ENCODE measurements at regions of chr5 and their contacts with region 1.

Region 1: DNA sequence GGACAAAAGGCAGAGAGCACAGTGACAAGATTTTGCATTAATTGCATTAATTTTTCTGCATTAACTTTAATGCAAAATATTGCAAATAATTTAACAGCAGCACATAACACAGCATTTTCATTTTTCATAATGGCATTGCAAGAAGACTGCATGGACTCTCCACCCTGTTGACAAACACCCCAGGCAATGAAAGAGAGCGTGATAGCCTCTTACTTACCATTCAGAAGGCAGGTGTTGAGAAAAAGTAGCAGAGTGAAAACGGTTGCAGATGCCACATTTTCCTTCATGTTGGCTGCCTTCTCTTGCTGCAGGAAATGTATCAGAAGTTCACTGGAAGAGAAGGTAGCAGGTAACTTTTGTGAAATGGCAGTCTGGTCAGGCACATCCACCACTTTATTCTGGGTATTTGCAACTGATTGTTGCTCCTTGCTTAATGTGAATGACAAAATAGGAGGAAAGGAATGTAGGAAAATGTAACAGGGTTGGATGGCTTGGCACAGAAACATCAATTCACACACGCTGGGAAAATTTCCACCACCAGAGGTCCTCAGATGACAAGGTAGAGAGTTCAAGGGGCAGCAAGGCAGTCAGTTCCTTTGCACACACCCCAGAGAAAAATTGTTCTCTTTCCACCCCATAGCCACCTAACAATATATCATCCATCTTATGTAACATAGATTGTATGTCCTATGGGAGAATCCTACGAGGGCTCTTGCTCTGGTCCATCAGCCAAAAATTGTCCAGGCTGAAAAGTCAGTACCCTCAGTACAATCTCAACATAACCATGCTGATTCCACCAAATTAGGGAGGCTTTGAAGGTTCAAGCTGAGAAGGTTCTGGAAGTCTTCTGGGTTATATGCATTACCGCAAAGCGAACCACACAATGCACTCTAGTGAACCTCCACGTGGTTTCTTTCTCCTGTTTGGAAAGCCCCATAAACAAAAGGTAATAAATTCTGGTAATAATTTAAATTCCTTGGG is 41.9 kb upstream of the AGXT2 start:
- DNase-seq: peak; percentile 82
- H3K4me3 ChIP-seq: no peak overlapping the region
- H3K27ac ChIP-seq: no peak overlapping the region
- H3K4me1 ChIP-seq: no peaks in the 10 kb centered on the region
- H3K27me3 ChIP-seq: no peaks in the 10 kb centered on the region
- CTCF ChIP-seq: peak; percentile 69

Region 2: GRCh38 chr5:35182541-35183535 is 93.2 kb after region 1 on chr5:
- intact Hi-C with region 1: loop called (anchors 5 kb)
- DNase-seq: peak; percentile 59
- H3K4me3 ChIP-seq: no peak overlapping the region
- H3K27ac ChIP-seq: no peak overlapping the region
- H3K4me1 ChIP-seq: no peaks in the 10 kb centered on the region
- H3K27me3 ChIP-seq: no peaks in the 10 kb centered on the region
- CTCF ChIP-seq: peak; percentile 39

Region 3: GRCh38 chr5:35369965-35370790 is 280.6 kb after region 1 on chr5:
- intact Hi-C with region 1: no loop called
- DNase-seq: no peak
- H3K4me3 ChIP-seq: no peak overlapping the region
- H3K27ac ChIP-seq: no peak overlapping the region
- H3K4me1 ChIP-seq: peaks cover 4% of the 10 kb centered on the region
- H3K27me3 ChIP-seq: no peaks in the 10 kb centered on the region
- CTCF ChIP-seq: no peak

Region 4: DNA sequence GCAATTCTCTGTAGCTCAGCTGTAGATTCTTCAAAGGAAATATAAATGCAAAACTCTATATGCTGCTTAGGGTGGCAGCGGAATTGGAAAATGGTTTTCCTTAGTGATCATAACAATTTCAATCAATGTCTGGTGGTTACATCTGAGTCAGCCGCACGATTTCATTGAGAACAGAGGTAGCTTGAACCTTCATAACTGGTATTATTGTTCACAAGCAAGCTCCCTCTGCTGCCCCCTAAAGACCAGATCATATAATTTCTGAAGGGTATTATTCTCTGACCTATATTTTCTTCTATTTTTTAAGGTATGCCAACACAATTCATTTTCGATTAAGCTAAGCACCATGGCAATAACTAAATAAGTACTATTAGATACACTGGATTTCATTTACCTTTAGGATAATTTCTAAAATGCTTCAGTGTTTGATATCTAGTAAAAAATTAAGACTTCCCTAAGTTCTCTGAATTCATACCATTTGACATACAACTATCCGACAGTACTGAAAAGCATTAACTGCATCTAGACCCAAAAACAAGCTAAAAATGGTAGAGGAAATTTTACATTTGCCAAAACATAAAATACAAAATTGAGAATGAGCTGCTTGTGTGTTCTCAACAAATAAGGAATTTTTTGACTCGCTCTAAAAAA is 346.9 kb after region 1 on chr5:
- intact Hi-C with region 1: loop called (anchors 5 kb)
- DNase-seq: peak; percentile 38
- H3K4me3 ChIP-seq: no peak overlapping the region
- H3K27ac ChIP-seq: no peak overlapping the region
- H3K4me1 ChIP-seq: no peaks in the 10 kb centered on the region
- H3K27me3 ChIP-seq: no peaks in the 10 kb centered on the region
- CTCF ChIP-seq: peak; percentile 65

Region 5: GRCh38 chr5:35617435-35618303 is 528.0 kb after region 1 on chr5 and contains the start of gene SPEF2:
- intact Hi-C with region 1: loop called (anchors 5 kb)
- DNase-seq: peak; percentile 84
- H3K4me3 ChIP-seq: peak within 1 kb of the TSS; percentile 77
- H3K27ac ChIP-seq: no peak within 1 kb of the TSS
- H3K4me1 ChIP-seq: peaks cover 5% of the 10 kb centered on the region
- H3K27me3 ChIP-seq: no peaks in the 10 kb centered on the region
- CTCF ChIP-seq: peak; percentile 58
- total RNA-seq, gene SPEF2: 3.3 to 6.0 TPM

Measured in colonic mucosa (tissue), 4 donors.